Naive thymus-derived CD8-positive, alpha-beta T cell (primary cell): ENCODE measurements at regions of chr12 and their contacts with region 1.

Region 1: DNA sequence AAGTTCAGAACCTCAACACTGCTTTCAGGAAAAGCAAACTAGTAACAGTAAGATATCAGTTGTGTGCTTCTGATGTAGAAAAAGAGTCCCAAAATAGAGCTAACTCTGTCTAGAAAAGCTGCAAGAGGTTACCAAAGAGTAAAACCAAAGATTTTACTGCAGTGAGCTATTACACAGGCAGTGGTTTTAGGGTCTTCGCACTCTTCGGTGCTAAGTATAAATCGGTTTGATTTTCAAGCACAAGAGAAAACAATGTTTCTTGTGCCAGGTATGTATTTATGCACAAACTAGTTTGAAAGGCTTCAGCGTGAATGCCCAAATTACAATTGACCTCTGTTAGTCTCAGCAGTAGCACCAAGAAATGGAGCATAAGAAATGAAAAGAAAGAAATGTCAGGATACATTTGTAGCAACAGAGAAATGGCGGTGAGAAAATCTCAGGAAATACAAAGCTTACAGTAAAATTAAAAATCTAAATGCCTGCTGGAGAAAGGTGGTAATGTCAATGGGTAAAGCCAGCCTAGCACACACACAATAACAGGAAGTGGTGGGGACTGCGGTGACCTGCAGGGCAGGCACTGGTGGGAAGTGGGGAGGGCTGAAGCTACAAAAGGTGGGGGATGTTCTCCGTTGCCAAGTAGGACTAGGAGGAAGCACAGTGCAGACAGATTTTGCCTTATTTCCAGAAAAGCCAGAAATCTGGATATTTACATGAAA is 18.0 kb upstream of the DYRK2 start:
- DNase-seq: peak; percentile 78 to 97 (median 91)
- ATAC-seq: peak; percentile 95 to 99
- H3K4me3 Mint-ChIP-seq: peak overlapping the region; percentile 55 to 91 (median 76)
- H3K27ac Mint-ChIP-seq: peak overlapping the region; percentile 84 to 98 (median 96)
- H3K4me1 Mint-ChIP-seq: peaks cover 53 to 95% (median 89%) of the 10 kb centered on the region in 4 donors
- H3K27me3 Mint-ChIP-seq: peaks cover 0 to 2% (median 0%) of the 10 kb centered on the region in 5 donors

Region 2: DNA sequence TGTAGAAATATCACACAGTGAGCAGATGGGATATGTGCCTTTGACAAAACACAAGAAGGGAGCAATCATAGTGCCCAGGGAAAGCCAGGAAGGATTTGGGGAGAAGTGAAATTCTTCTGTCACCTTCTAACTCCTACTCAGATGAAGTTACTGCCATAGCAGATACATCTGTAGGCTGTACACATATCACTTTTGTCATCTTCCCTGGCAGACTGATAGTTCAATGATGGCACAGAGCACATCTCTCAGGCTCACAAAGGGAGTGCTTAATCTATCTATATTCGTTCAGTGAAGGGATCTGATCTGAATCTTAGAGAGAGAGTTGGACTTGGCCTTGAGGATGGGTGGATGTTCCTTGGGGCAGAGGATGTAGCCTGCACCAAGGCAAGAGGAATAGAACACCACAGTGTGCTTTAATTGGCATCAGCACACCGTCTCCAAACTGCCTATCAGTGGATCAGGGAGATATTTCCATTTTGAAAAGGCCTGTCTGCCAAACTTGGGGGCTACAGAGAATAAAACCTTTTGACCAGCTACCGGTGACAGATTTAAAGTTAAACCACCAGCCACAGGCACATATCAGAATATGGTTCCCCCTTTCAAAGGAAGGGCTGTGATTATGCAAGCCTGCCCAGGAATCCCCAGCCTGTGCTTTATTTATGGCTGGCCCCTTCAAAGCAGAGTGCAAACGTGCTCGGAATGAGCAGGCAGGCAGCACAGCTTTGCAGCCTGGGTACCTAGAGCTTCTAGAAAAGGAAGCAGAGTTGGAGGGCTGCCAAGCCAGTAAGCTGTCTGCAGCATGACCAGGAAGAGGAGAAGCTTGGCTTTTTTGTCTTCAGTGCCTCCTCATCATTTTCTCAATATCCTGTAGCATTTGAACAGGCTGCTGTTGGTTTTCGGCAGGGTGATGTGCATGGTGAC is 147.5 kb before region 1 on chr12:
- POLR2A ChIA-PET with region 1: interaction called, 11 read pairs
- DNase-seq: peak; percentile 63 to 93 (median 80)
- ATAC-seq: peak; percentile 95
- H3K4me3 Mint-ChIP-seq: peak overlapping the region in 9 of 10 donors; percentile 31 to 57 (median 50)
- H3K27ac Mint-ChIP-seq: peak overlapping the region in 9 of 10 donors; percentile 62 to 96 (median 87)
- H3K4me1 Mint-ChIP-seq: peaks cover 24 to 42% (median 39%) of the 10 kb centered on the region in 4 donors
- H3K27me3 Mint-ChIP-seq: no peaks in the 10 kb centered on the region

Region 3: DNA sequence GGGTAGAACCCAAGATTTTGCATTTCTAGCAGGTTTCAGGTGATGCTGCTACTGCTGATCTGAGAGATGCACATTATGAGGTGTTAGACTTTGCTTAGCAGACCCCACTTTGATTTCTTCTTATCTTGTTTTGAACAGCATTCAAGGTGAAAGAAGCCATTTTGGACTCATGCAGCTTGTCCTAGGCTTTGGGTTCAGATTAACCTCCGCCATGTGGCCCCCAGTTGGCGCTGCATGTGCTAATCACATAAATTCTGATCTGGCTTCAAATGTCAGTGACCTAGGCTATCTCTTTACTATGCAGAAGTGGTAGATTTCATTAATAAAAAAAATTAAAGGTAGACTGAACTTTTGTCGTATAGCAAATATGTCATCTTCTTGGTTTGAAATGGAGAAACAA is 71.8 kb before region 1 on chr12:
- POLR2A ChIA-PET with region 1: interaction called, 15 read pairs
- DNase-seq: no peak
- ATAC-seq: no peak
- H3K4me3 Mint-ChIP-seq: no peak overlapping the region
- H3K27ac Mint-ChIP-seq: no peak overlapping the region
- H3K4me1 Mint-ChIP-seq: peaks cover 0 to 18% (median 8%) of the 10 kb centered on the region in 4 donors
- H3K27me3 Mint-ChIP-seq: no peaks in the 10 kb centered on the region

Region 4: GRCh38 chr12:67592216-67593011 is 38.1 kb before region 1 on chr12:
- POLR2A ChIA-PET with region 1: interaction called, 16 read pairs
- DNase-seq: peak in 2 of 10 donors; percentile 36 to 39
- ATAC-seq: peak in 1 of 2 donors; percentile 26
- H3K4me3 Mint-ChIP-seq: peak overlapping the region in 9 of 10 donors; percentile 3 to 69 (median 44)
- H3K27ac Mint-ChIP-seq: peak overlapping the region; percentile 45 to 92 (median 83)
- H3K4me1 Mint-ChIP-seq: peaks cover 29 to 62% (median 56%) of the 10 kb centered on the region in 4 donors
- H3K27me3 Mint-ChIP-seq: no peaks in the 10 kb centered on the region

Region 5: GRCh38 chr12:67648521-67649260 is 18.2 kb after region 1 on chr12 and contains the start of gene DYRK2:
- POLR2A ChIA-PET with region 1: interaction called, 352 read pairs
- DNase-seq: peak; percentile 68 to 89 (median 79)
- ATAC-seq: peak; percentile 51 to 55
- H3K4me3 Mint-ChIP-seq: peak within 1 kb of the TSS; percentile 88 to 99 (median 96)
- H3K27ac Mint-ChIP-seq: peak within 1 kb of the TSS; percentile 92 to 99 (median 98)
- H3K4me1 Mint-ChIP-seq: peaks cover 27 to 49% (median 37%) of the 10 kb centered on the region in 4 donors
- H3K27me3 Mint-ChIP-seq: no peaks in the 10 kb centered on the region
- polyA plus RNA-seq, gene DYRK2: 47.7 to 94.7 (median 62.4) TPM